Sigmoid colon (tissue), 7 donors: ENCODE measurements at regions of chr7 and their contacts with region 1.

Region 1: DNA sequence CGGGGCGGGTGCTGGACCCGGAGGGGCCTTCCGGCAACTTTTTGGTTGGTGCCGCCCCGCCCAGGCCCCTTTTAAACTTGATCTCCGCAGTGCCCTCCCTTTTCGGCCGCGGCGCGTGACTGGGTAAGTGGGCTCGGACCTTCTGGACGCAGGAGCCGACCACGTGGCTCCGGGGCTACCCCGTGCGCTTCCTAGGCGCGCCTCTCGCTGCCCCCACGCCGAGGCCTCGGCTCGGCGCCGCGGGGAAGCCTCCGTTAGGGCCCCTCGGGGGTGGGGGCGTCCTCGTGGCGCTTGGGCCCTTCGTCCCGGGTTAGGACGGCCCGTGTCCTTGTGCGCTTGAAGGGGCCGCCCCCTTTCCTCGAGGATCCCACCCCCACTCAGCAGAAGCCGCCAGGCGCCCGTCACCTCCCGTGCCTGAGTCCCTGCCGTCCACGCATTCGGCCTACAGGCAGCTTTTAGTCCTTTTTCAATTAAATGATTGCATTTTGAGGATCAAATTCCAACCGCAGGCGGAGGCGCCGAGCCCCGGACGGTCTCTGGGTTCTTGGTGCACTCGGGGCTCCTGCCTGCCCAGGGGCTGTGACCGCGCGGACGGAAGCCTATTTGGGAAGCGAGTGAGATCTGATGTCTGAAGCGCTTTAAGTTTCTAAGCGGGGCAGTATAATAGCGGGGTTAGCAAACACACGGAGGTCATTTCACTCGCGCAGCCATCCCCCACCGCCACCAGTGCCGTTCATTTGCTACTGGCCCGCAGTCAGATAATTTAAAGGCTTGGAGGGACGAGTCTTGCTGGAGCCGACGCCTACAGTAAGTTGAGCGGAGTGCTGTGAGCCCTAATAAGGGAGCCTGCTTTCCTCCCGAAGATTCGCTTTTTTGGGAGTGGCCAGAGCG is 31.8 kb upstream of the TOMM7 start:
- DNase-seq: peak; percentile 98
- H3K4me3 ChIP-seq: peak overlapping the region; percentile 62 to 80 (median 75)
- H3K27ac ChIP-seq: peak overlapping the region; percentile 92 to 98 (median 98)
- H3K4me1 ChIP-seq: peaks cover 0 to 38% (median 26%) of the 10 kb centered on the region in 4 donors
- H3K27me3 ChIP-seq: no peaks in the 10 kb centered on the region
- CTCF ChIP-seq: no peak
- EP300 ChIP-seq: peak in 2 of 4 donors; percentile 36 to 60
- POLR2A ChIP-seq: peak; percentile 34 to 41

Region 2: GRCh38 chr7:22542254-22542653 is 312.1 kb before region 1 on chr7:
- intact Hi-C with region 1: no loop called
- DNase-seq: no peak
- H3K4me3 ChIP-seq: no peak overlapping the region
- H3K27ac ChIP-seq: no peak overlapping the region
- H3K4me1 ChIP-seq: no peaks in the 10 kb centered on the region
- H3K27me3 ChIP-seq: peaks cover 0 to 38% (median 0%) of the 10 kb centered on the region in 3 donors
- CTCF ChIP-seq: no peak
- EP300 ChIP-seq: no peak
- POLR2A ChIP-seq: no peak

Region 3: DNA sequence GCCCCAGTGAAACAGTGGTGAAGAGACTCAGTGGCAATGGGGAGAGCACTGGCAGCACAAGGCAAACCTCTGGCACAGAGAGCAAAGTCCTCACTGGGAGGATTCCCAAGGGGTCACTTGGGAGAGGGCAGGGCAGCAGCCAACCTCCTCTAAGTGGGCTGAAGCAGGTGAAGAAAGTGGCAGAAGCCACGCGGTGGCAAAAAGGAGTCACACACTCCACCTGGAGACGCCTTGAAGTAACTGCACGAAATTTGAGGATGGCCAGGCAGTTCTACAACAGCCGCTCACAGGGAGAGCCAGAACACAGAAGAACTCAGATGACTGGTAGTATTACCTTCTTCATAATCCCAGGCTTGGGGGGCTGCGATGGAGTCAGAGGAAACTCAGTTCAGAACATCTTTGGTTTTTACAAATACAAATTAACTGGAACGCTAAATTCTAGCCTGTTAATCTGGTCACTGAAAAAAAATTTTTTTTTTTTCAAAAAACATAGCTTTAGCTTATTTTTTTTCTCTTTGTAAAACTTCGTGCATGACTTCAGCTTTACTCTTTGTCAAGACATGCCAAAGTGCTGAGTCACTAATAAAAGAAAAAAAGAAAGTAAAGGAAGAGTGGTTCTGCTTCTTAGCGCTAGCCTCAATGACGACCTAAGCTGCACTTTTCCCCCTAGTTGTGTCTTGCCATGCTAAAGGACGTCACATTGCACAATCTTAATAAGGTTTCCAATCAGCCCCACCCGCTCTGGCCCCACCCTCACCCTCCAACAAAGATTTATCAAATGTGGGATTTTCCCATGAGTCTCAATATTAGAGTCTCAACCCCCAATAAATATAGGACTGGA is 127.8 kb before region 1 on chr7:
- intact Hi-C with region 1: loop called (anchors 5 kb)
- DNase-seq: peak; percentile 83
- H3K4me3 ChIP-seq: peak overlapping the region; percentile 11 to 44 (median 36)
- H3K27ac ChIP-seq: peak overlapping the region; percentile 68 to 81 (median 73)
- H3K4me1 ChIP-seq: peaks cover 0 to 62% (median 60%) of the 10 kb centered on the region in 4 donors
- H3K27me3 ChIP-seq: no peaks in the 10 kb centered on the region
- CTCF ChIP-seq: peak in 3 of 4 experiments; percentile 48 to 54 (median 52)
- EP300 ChIP-seq: no peak
- POLR2A ChIP-seq: no peak

Region 4: DNA sequence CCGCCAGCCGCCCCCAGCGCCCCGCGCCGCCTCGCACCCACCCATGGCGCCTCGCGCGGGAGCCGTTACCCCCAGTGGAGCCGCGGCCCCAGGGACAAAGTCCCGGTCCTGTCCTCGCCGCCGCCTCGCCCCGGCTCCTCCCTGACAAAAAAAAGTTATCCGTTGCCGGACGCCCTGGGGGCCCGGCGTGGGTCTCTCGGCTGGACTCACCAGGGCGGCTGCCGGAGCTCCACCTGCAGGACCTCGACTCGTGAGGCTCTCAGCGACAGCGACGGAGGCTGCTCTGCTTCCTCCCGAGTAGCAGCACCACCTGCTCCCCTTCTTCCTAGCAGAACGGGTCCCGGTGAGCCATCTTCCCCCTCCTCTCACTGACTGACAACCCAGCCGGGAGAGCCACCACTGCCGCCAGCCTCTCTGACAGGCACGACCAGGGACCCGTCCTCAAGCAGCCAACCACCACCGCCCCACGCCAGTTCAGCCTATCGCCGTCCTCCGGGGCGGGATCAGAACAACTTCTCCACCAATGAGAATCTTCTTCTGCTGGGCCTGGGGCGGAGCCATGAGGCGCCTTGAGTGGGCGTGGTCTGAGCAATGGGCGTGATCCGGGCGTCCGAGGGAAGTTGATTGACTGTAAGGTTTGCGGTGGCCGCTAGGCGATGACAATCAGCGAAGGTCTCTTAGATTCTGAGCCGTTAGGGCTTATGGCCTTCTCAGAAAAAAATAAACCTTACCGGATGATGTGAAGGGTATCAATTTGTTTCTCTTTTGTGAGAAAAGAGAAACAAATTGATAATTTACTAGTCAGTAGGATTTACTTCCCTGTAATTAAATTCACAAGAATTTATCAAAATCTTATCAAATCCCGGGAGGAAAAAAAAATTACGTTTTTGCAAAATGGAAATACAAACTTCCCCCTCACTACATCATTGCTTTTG is 159.6 kb after region 1 on chr7 and contains the start of gene HYCC1:
- intact Hi-C with region 1: loop called (anchors 1 kb)
- DNase-seq: peak; percentile 100
- H3K4me3 ChIP-seq: peak within 1 kb of the TSS; percentile 84 to 88 (median 86)
- H3K27ac ChIP-seq: peak within 1 kb of the TSS; percentile 82 to 90 (median 84)
- H3K4me1 ChIP-seq: peaks cover 0 to 25% (median 17%) of the 10 kb centered on the region in 4 donors
- H3K27me3 ChIP-seq: no peaks in the 10 kb centered on the region
- CTCF ChIP-seq: peak; percentile 47 to 68 (median 62)
- EP300 ChIP-seq: no peak
- POLR2A ChIP-seq: peak; percentile 88 to 92
- total RNA-seq, gene HYCC1: 28.8 to 49.9 (median 35.0) TPM

Region 5: GRCh38 chr7:23105644-23106056 is 251.2 kb after region 1 on chr7 and contains the start of gene KLHL7:
- intact Hi-C with region 1: loop called (anchors 10 kb)
- DNase-seq: peak; percentile 98
- H3K4me3 ChIP-seq: peak within 1 kb of the TSS; percentile 64 to 97 (median 90)
- H3K27ac ChIP-seq: peak within 1 kb of the TSS; percentile 87 to 99 (median 96)
- H3K4me1 ChIP-seq: peaks cover 0 to 37% (median 28%) of the 10 kb centered on the region in 4 donors
- H3K27me3 ChIP-seq: no peaks in the 10 kb centered on the region
- CTCF ChIP-seq: no peak
- EP300 ChIP-seq: no peak
- POLR2A ChIP-seq: peak; percentile 84 to 93
- total RNA-seq, gene KLHL7: 26.9 to 42.5 (median 28.4) TPM